Heart right ventricle (tissue), 16 donors: ENCODE measurements at regions of chr6 and their contacts with region 1.

Region 1: DNA sequence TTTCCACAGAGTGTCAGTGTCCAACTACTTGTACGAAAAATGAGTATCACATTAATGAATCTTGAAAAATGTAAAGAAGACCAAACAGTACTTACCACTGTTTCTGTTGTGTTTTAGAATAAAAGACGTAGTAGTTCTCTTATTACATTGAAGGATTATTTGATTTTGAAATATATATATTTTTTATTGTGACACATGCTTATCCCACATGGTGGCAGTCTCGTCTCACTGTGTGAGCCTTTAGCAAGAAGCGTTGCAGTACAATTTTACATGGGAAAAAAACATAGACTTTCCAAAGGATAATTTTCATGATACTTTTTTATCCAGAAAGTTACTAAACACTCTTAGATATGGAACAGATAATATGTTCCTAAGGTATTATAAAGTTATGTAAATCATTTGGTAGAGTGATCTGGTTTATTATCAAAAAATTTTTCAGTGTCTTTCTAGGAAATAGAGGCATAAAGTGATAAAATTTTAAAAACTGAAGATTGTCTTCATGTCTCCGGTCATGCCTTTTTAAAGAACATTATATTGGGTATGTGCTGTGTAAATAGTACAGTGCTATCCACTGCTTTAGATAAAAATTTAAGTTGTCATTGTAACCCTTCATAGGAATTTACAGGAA is 117.5 kb upstream of the SAMD5 start:
- DNase-seq: no peak
- ATAC-seq: no peak
- H3K4me3 ChIP-seq: no peak overlapping the region
- H3K27ac ChIP-seq: no peak overlapping the region
- H3K4me1 ChIP-seq: no peaks in the 10 kb centered on the region
- H3K27me3 ChIP-seq: no peaks in the 10 kb centered on the region
- CTCF ChIP-seq: peak; percentile 10 to 63 (median 44)

Region 2: DNA sequence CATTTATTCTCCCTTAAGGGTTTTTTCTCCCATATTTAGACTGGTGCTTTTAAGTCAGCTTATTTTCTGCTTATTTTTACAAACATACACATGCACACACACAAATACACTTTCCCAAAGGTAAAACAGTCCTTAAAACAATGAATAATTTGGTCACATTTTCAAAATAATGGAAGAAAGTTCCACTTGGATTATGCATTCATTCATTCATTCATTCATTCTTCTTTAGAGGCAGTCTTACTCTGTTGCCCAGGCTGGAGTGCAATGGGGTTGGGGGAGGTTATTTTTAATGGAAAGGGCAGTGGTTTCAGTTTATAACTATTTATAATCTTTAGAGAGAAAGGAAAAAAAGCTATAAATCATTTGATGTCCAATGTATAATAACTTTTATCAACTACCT is 117.0 kb before region 1 on chr6:
- intact Hi-C with region 1: no loop called
- DNase-seq: no peak
- ATAC-seq: no peak
- H3K4me3 ChIP-seq: no peak overlapping the region
- H3K27ac ChIP-seq: no peak overlapping the region
- H3K4me1 ChIP-seq: no peaks in the 10 kb centered on the region
- H3K27me3 ChIP-seq: no peaks in the 10 kb centered on the region
- CTCF ChIP-seq: no peak

Region 3: GRCh38 chr6:148144917-148145521 is 754.0 kb after region 1 on chr6:
- intact Hi-C with region 1: loop called in 3 of 10 experiments (anchors 10 kb)
- DNase-seq: peak; percentile 68 to 73
- ATAC-seq: peak in 4 of 8 donors; percentile 46 to 59 (median 52)
- H3K4me3 ChIP-seq: peak overlapping the region in 1 of 10 donors; percentile 12
- H3K27ac ChIP-seq: no peak overlapping the region
- H3K4me1 ChIP-seq: peaks cover 0 to 4% (median 0%) of the 10 kb centered on the region in 9 donors
- H3K27me3 ChIP-seq: no peaks in the 10 kb centered on the region
- CTCF ChIP-seq: peak; percentile 58 to 89 (median 83)

Region 4: DNA sequence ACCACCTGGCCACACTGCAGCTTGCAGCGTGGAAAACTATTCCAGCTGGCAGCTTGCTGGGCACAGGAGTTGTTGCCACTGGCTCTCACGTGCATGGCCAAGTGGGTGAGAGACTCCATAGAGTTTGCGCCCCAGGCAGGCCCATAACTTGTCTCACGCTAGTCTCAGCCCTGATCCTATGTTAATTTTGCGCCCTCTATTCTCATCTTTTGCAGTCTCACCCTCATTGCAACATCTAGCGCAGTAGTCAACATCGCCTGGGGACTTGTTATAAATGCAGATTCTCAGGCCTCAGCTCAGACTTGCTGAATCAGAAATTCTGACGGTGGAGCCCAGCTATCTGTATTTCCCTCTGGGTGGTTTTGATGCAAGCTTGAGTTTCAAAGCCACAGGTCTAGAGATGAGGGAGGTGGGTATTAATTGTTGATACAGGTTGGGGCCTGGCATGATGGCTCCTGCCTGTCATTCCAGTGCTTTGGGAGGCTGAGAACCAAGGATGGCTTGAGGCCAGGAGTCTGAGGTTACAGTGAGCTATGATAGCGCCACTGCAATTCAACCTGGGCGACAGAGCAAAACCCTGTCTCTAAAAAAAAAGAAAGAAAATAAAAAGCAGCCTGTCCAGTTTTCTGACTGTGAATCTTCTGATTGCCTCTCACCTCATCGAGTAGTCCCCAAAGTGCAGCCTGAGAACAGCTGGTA is 766.7 kb after region 1 on chr6:
- intact Hi-C with region 1: loop called in 3 of 10 experiments (anchors 10 kb)
- DNase-seq: no peak
- ATAC-seq: peak in 1 of 8 donors; percentile 45
- H3K4me3 ChIP-seq: no peak overlapping the region
- H3K27ac ChIP-seq: no peak overlapping the region
- H3K4me1 ChIP-seq: no peaks in the 10 kb centered on the region
- H3K27me3 ChIP-seq: no peaks in the 10 kb centered on the region
- CTCF ChIP-seq: no peak

Region 5: GRCh38 chr6:148166339-148166968 is 775.4 kb after region 1 on chr6:
- intact Hi-C with region 1: loop called in 4 of 10 experiments (anchors 5 to 10 kb)
- DNase-seq: peak in 1 of 2 donors; percentile 23
- ATAC-seq: no peak
- H3K4me3 ChIP-seq: no peak overlapping the region
- H3K27ac ChIP-seq: no peak overlapping the region
- H3K4me1 ChIP-seq: no peaks in the 10 kb centered on the region
- H3K27me3 ChIP-seq: no peaks in the 10 kb centered on the region
- CTCF ChIP-seq: peak; percentile 10 to 79 (median 72)